Endothelial cell of umbilical vein (primary cell): ENCODE measurements at regions of chr10 and their contacts with region 1.

Region 1: DNA sequence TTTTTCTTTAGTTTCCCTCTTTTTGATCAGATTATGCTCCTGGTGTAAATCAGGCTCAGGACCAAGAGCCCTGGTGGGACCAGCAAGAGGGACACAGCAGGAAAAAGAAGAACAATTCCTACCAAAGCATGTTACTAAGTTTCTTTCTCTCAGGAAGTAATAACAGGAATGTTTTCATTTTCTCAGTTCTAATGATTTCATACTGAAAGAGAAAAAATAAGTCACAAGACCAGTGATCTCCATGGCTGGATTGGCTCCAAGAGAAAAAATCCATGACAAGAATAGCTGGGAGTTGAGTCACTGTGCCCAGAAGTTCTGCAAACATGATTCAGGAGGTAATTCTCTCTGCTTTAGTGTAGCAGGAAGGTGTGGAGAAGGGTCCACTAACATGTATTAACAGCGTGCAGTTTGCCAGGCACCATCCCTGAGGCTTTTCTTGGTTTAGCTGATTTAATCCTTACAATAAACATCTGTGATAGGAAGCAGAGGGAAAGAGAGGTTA is 23.8 kb upstream of the IFIT2 start:
- DNase-seq: peak; percentile 98
- H3K4me3 ChIP-seq: peak overlapping the region in 1 of 3 experiments; percentile 12
- H3K27ac ChIP-seq: peak overlapping the region; percentile 49
- H3K4me1 ChIP-seq: peaks cover 38% of the 10 kb centered on the region
- H3K27me3 ChIP-seq: peaks cover 38 to 72% of the 10 kb centered on the region in 2 experiments
- CTCF ChIP-seq: no peak
- POLR2A ChIP-seq: no peak

Region 2: DNA sequence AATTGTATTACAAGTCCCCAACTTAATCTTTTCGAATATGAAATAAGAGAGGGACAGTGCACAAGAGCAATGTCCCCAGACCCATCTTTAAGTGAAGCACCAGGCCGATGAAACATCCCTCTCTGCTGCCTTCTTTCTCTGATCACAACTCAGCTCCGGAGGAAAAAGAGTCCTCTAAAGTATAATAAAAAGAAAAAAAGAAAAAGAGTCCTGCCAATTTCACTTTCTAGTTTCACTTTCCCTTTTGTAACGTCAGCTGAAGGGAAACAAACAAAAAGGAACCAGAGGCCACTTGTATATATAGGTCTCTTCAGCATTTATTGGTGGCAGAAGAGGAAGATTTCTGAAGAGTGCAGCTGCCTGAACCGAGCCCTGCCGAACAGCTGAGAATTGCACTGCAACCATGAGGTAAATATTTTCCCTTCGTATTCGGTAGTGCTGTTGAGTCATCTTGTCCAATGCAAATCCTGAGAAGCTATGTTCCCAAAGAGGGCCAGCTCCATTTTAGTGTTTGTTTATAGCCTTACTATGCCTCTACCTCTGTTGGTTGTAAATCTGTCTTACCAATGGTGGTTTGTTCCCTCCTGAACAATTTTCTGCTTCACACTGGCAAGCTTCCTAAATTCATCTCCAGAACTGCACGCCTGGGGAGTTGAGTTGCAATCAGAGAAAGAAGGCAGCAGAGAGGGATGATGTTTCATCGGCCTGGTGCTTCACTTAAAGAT is 23.8 kb after region 1 on chr10 and contains the start of gene IFIT2:
- CTCF ChIA-PET with region 1: interaction called, 10 read pairs
- POLR2A ChIA-PET with region 1: no interaction called
- dilution Hi-C with region 1: no loop called
- intact Hi-C with region 1: loop called (anchors 2 kb)
- DNase-seq: peak; percentile 87
- H3K4me3 ChIP-seq: peak within 1 kb of the TSS; percentile 34 to 91 (median 71)
- H3K27ac ChIP-seq: peak within 1 kb of the TSS; percentile 33
- H3K4me1 ChIP-seq: peaks cover 10% of the 10 kb centered on the region
- H3K27me3 ChIP-seq: peaks cover 15 to 22% of the 10 kb centered on the region in 2 experiments
- CTCF ChIP-seq: no peak
- POLR2A ChIP-seq: no peak
- total RNA-seq, gene IFIT2: 0.51 and 1.4 TPM in 2 replicates

Region 3: DNA sequence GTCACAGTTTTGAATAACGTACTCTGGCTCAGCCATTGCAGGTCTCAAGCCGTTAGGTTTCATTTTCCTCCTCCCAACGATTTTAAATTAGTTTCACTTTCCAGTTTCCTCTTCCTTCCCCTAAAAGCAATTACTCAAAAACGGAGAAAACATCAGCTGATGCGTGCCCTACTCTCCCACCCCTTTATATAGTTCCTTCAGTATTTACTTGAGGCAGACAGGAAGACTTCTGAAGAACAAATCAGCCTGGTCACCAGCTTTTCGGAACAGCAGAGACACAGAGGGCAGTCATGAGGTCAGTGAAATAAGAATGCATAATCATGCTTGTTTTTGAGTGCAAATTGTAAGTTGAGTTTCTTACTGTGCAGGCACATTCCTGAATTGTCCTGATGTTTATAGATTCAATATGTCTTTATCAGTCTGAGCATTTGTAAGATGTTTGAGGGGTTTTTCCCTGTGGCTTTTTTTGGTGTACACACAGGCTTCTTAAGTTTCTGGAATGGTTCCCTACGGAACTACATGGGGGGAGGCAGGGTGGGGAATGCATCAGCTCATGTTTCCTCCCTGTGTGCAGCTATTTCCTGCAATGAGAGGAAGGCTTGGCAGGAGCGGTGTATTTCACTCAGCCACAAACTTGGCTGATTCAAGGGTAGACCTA is 49.8 kb after region 1 on chr10 and contains the start of gene IFIT3:
- CTCF ChIA-PET with region 1: no interaction called
- POLR2A ChIA-PET with region 1: no interaction called
- dilution Hi-C with region 1: no loop called
- intact Hi-C with region 1: loop called (anchors 1 kb)
- DNase-seq: peak; percentile 95
- H3K4me3 ChIP-seq: peak within 1 kb of the TSS; percentile 24 to 80 (median 39)
- H3K27ac ChIP-seq: peak within 1 kb of the TSS; percentile 88
- H3K4me1 ChIP-seq: peaks cover 21% of the 10 kb centered on the region
- H3K27me3 ChIP-seq: no peaks in the 10 kb centered on the region
- CTCF ChIP-seq: no peak
- POLR2A ChIP-seq: peak; percentile 19
- total RNA-seq, gene IFIT3: 2.6 and 3.1 TPM in 2 replicates

Region 4: GRCh38 chr10:89346264-89347254 is 68.5 kb after region 1 on chr10:
- CTCF ChIA-PET with region 1: interaction called, 3 read pairs
- POLR2A ChIA-PET with region 1: no interaction called
- dilution Hi-C with region 1: no loop called
- intact Hi-C with region 1: loop called (anchors 5 kb)
- DNase-seq: peak; percentile 69
- H3K4me3 ChIP-seq: no peak overlapping the region
- H3K27ac ChIP-seq: no peak overlapping the region
- H3K4me1 ChIP-seq: peaks cover 6% of the 10 kb centered on the region
- H3K27me3 ChIP-seq: peaks cover 0 to 5% of the 10 kb centered on the region in 2 experiments
- CTCF ChIP-seq: no peak
- POLR2A ChIP-seq: no peak